Activated CD4-positive, alpha-beta T cell treated with anti-CD3 and anti-CD28 coated beads for 36 hours (primary cell): ENCODE measurements at regions of chr6 and their contacts with region 1.

Region 1: DNA sequence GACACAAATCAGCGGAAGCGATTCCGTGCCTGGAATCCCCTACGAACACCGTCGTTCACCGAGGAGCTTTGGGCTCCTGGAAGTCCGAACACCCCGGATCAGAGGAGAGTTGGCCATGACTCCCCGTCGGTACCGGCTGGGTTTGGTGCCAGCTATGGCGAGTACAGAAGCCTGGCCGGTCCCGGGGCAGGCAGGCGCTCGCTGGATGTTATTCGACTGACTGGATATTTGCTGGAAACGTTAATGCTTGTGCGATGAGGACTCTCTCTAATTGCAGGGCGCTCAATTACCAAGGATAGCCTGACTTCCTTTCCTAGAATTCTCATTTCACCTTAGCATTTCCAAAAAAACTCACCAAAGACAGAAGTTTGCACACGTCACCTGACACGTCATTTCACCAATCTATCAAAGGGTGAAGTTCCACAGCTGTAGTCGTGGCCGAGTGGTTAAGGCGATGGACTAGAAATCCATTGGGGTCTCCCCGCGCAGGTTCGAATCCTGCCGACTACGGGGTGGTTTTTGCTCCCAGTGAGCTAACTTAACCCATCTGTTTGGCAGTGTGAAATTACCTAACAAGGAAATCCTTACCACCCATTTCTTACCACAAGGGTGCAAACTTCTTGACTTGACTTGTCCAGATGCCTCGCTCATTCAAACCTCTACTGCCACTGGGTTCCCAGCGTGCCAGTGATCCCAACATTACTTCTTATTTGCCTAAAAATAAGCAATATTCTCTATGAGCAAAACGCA is 22.7 kb upstream of the ZNF184 start:
- DNase-seq: peak; percentile 89
- ATAC-seq: peak; percentile 90
- H3K4me3 Mint-ChIP-seq: peak overlapping the region; percentile 79
- H3K27ac Mint-ChIP-seq: peak overlapping the region; percentile 29
- H3K4me1 Mint-ChIP-seq: peaks cover 17% of the 10 kb centered on the region
- H3K27me3 Mint-ChIP-seq: peaks cover 26% of the 10 kb centered on the region

Region 2: GRCh38 chr6:27049863-27050781 is 445.4 kb before region 1 on chr6:
- CTCF ChIA-PET with region 1: no interaction called
- POLR2A ChIA-PET with region 1: no interaction called
- intact Hi-C with region 1: no loop called
- DNase-seq: no peak
- ATAC-seq: no peak
- H3K4me3 Mint-ChIP-seq: no peak overlapping the region
- H3K27ac Mint-ChIP-seq: no peak overlapping the region
- H3K4me1 Mint-ChIP-seq: no peaks in the 10 kb centered on the region
- H3K27me3 Mint-ChIP-seq: peaks cover 11% of the 10 kb centered on the region

Region 3: GRCh38 chr6:27205375-27206278 is 289.9 kb before region 1 on chr6:
- CTCF ChIA-PET with region 1: no interaction called
- POLR2A ChIA-PET with region 1: no interaction called
- intact Hi-C with region 1: no loop called
- DNase-seq: peak; percentile 56
- ATAC-seq: no peak
- H3K4me3 Mint-ChIP-seq: peak overlapping the region; percentile 39
- H3K27ac Mint-ChIP-seq: no peak overlapping the region
- H3K4me1 Mint-ChIP-seq: peaks cover 11% of the 10 kb centered on the region
- H3K27me3 Mint-ChIP-seq: peaks cover 34% of the 10 kb centered on the region

Region 4: DNA sequence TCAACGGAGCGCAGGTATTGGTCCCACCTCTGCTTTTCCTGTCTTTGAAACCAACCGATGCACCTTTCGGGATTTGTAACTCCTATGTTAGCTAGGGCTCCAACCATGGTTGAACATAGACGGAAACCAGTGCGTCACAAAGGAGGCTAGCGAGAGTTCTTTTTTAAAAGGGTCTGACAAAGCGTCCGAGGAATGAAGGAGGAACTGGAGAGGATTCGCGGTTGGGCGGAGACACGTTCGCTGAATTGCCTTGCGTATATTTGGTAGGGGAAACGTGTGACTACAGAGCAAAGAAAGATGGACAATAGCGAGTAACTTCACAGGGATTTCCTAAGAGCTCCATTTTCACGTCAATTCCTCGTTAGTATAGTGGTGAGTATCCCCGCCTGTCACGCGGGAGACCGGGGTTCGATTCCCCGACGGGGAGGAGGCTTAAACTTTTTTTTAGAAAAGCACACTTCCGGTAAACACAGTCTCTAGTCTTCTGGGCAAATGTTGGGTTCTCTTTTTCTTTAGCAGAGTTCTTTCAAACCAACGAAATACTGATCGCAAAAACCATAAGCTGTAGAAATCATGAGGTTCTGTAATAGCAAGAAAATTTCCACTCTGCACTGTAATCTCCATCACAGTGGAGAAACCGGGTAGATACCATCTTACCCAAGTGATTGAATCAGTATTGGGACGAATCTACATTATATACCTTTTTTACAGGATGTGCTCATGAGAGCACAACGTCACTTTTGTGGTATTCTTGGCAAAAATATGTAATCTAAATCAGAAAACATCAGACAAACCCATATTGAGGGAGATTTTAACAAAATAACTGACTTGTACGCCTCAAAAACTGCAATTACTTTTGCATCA is 16.0 kb before region 1 on chr6:
- CTCF ChIA-PET with region 1: no interaction called
- POLR2A ChIA-PET with region 1: no interaction called
- intact Hi-C with region 1: loop called in 1 of 2 experiments (anchors 1 kb)
- DNase-seq: peak; percentile 89
- ATAC-seq: peak; percentile 69
- H3K4me3 Mint-ChIP-seq: no peak overlapping the region
- H3K27ac Mint-ChIP-seq: no peak overlapping the region
- H3K4me1 Mint-ChIP-seq: peaks cover 6% of the 10 kb centered on the region
- H3K27me3 Mint-ChIP-seq: no peaks in the 10 kb centered on the region